ENCODE measurements at regions of chr17 and their contacts with region 1.

Region 1: GRCh38 chr17:8991514-8992285 is 26.2 kb upstream of the PIK3R5 start:
- DNase-seq: peak; percentile 89
- H3K4me3 Mint-ChIP-seq: no peak overlapping the region
- H3K27ac Mint-ChIP-seq: no peak overlapping the region
- H3K4me1 Mint-ChIP-seq: peaks cover 10% of the 10 kb centered on the region
- H3K27me3 Mint-ChIP-seq: peaks cover 6% of the 10 kb centered on the region

Region 2: DNA sequence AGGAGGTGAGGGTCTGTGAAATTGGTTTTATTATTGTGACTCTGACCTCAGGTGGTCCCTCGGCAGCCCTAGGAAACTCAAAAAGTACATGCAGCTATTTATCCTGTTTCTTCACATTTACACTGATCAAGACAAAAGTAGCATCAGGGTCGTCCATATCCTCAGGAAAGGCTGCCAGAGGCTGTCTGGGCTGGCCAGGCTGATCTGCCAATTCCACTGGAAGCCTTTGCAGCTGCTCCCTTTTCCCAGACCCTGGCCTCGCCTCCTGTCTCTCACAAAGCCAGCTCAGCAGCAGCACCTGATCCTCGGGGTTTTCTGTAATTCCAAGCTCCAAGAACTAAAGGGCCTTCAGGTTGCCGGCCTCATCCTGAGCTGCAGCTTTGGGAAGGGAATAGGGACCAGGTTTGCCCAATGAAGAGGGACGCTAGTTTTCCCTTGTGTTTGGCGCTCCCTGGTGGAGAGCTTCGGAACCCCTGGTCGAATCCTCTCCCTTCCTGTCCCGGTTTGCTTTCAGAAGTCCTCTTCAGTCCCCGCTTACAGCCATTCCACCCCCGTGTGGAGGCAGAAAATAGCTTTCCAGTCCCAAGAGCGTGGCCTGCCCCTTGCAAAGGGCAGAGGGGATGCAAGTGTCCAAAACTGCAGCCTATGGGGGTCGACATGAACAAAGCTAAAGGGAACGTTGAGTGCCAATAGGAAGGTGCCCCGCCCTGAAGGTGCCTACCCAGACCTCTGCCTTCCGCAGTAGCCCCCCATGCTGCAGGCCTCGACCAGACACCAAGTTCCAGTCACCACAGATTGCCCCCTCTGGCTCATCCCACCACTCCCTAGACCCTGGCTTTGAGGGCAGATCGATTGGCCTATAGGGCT is 205.9 kb before region 1 on chr17:
- intact Hi-C with region 1: loop called (anchors 10 kb)
- DNase-seq: peak; percentile 87
- H3K4me3 Mint-ChIP-seq: no peak overlapping the region
- H3K27ac Mint-ChIP-seq: no peak overlapping the region
- H3K4me1 Mint-ChIP-seq: peaks cover 2% of the 10 kb centered on the region
- H3K27me3 Mint-ChIP-seq: peaks cover 10% of the 10 kb centered on the region

Region 3: GRCh38 chr17:9044772-9045470 is 53.2 kb after region 1 on chr17:
- intact Hi-C with region 1: no loop called
- DNase-seq: no peak
- H3K4me3 Mint-ChIP-seq: no peak overlapping the region
- H3K27ac Mint-ChIP-seq: no peak overlapping the region
- H3K4me1 Mint-ChIP-seq: no peaks in the 10 kb centered on the region
- H3K27me3 Mint-ChIP-seq: peaks cover 19% of the 10 kb centered on the region

Region 4: GRCh38 chr17:9138101-9138717 is 146.5 kb after region 1 on chr17:
- intact Hi-C with region 1: no loop called
- DNase-seq: no peak
- H3K4me3 Mint-ChIP-seq: no peak overlapping the region
- H3K27ac Mint-ChIP-seq: no peak overlapping the region
- H3K4me1 Mint-ChIP-seq: no peaks in the 10 kb centered on the region
- H3K27me3 Mint-ChIP-seq: no peaks in the 10 kb centered on the region

Region 5: DNA sequence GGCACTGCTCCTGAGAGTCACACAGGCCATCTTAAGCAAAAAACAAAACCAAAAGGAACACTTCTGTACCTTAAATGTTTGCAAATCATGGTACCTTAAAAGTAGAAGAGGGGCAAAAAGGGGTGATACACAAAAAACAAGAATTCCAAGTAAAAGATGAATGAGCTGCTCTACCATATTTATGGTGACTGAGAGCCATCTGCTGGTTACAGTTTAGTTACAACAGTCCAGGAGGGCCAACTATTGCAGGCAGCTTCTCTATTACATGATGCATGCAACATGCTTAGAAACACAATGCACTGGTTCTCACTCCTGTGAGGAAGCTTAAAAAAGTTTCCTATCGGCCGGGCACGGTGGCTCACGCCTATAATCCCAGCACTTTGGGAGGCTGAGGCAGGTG is 530.4 kb after region 1 on chr17:
- intact Hi-C with region 1: loop called (anchors 10 kb)
- DNase-seq: peak; percentile 68
- H3K4me3 Mint-ChIP-seq: no peak overlapping the region
- H3K27ac Mint-ChIP-seq: no peak overlapping the region
- H3K4me1 Mint-ChIP-seq: peaks cover 11% of the 10 kb centered on the region
- H3K27me3 Mint-ChIP-seq: no peaks in the 10 kb centered on the region

Measured in activated CD4-positive, alpha-beta T cell treated with anti-CD3 and anti-CD28 coated beads, Interleukin-2, amount 10 ng/mL, durations not matched to agents 24 days and 14 days (primary cell).